B cell (primary cell): ENCODE measurements at regions of chr9 and their contacts with region 1.

Region 1: GRCh38 chr9:33264473-33265177 is at the starts of genes BAG1 and CHMP5:
- DNase-seq: peak; percentile 99
- ATAC-seq: peak; percentile 97
- H3K4me3 ChIP-seq: peak within 1 kb of the TSS; percentile 89 to 99 (median 97)
- H3K4me3 Mint-ChIP-seq: peak within 1 kb of the TSS; percentile 88
- H3K27ac ChIP-seq: peak within 1 kb of the TSS; percentile 92 to 96
- H3K27ac Mint-ChIP-seq: peak within 1 kb of the TSS; percentile 98
- H3K4me1 ChIP-seq: peaks cover 19 to 23% of the 10 kb centered on the region in 2 donors
- H3K4me1 Mint-ChIP-seq: peaks cover 39% of the 10 kb centered on the region
- H3K27me3 ChIP-seq: no peaks in the 10 kb centered on the region
- H3K27me3 Mint-ChIP-seq: no peaks in the 10 kb centered on the region
- CTCF ChIP-seq: peak; percentile 34
- total RNA-seq, gene BAG1: 53.8 and 60.2 TPM in 2 replicates
- total RNA-seq, gene CHMP5: 28.2 and 29.7 TPM in 2 replicates

Region 2: GRCh38 chr9:32550562-32551433 is 713.8 kb before region 1 on chr9:
- CTCF ChIA-PET with region 1: no interaction called
- POLR2A ChIA-PET with region 1: no interaction called
- intact Hi-C with region 1: loop called (anchors 10 kb)
- DNase-seq: peak; percentile 97
- ATAC-seq: peak; percentile 84
- H3K4me3 ChIP-seq: peak overlapping the region; percentile 86 to 98 (median 87)
- H3K4me3 Mint-ChIP-seq: peak overlapping the region; percentile 91
- H3K27ac ChIP-seq: peak overlapping the region; percentile 89 to 92
- H3K27ac Mint-ChIP-seq: peak overlapping the region; percentile 91
- H3K4me1 ChIP-seq: peaks cover 14 to 15% of the 10 kb centered on the region in 2 donors
- H3K4me1 Mint-ChIP-seq: peaks cover 34% of the 10 kb centered on the region
- H3K27me3 ChIP-seq: no peaks in the 10 kb centered on the region
- H3K27me3 Mint-ChIP-seq: no peaks in the 10 kb centered on the region
- CTCF ChIP-seq: peak; percentile 5

Region 3: DNA sequence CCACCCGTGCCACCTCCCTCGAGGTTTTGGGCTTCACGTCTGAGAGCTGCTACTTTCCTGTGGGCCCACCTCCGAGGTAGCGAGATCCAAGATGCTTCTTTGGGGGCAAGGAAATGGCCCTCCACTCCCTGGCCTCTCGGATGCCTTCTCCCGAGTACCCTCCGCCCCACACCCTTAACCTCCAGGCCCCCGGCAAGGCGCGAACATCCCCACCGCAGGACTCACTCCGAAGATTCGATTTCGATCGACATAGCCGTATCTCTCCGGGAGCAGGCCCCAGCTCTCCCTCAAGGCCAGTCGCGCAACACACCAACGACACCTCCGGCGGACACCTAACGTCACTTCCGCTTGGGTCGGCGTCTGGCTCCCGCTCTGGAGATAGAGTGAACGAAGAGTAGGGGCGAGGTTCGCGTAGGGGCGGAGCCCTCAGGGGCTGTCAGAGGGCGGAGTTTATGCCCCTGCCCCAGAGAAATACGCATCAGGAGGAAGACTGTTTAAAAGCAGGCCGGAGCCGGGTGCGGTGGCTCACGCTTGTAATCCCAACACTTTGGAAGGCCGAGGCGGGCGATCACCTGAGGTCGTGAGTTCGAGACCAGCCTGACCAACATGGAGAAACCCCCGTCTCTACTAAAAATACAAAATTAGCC is 188.1 kb before region 1 on chr9 and contains the start of gene SMU1:
- CTCF ChIA-PET with region 1: interaction called, 5 read pairs
- POLR2A ChIA-PET with region 1: interaction called, 3 read pairs
- intact Hi-C with region 1: loop called (anchors 5 kb)
- DNase-seq: peak; percentile 97
- ATAC-seq: peak; percentile 98
- H3K4me3 ChIP-seq: peak within 1 kb of the TSS; percentile 72 to 87 (median 84)
- H3K4me3 Mint-ChIP-seq: peak within 1 kb of the TSS; percentile 97
- H3K27ac ChIP-seq: peak within 1 kb of the TSS; percentile 91 to 95
- H3K27ac Mint-ChIP-seq: peak within 1 kb of the TSS; percentile 98
- H3K4me1 ChIP-seq: peaks cover 17 to 29% of the 10 kb centered on the region in 2 donors
- H3K4me1 Mint-ChIP-seq: peaks cover 34% of the 10 kb centered on the region
- H3K27me3 ChIP-seq: no peaks in the 10 kb centered on the region
- H3K27me3 Mint-ChIP-seq: no peaks in the 10 kb centered on the region
- CTCF ChIP-seq: no peak
- total RNA-seq, gene SMU1: 26.3 and 27.4 TPM in 2 replicates

Region 4: DNA sequence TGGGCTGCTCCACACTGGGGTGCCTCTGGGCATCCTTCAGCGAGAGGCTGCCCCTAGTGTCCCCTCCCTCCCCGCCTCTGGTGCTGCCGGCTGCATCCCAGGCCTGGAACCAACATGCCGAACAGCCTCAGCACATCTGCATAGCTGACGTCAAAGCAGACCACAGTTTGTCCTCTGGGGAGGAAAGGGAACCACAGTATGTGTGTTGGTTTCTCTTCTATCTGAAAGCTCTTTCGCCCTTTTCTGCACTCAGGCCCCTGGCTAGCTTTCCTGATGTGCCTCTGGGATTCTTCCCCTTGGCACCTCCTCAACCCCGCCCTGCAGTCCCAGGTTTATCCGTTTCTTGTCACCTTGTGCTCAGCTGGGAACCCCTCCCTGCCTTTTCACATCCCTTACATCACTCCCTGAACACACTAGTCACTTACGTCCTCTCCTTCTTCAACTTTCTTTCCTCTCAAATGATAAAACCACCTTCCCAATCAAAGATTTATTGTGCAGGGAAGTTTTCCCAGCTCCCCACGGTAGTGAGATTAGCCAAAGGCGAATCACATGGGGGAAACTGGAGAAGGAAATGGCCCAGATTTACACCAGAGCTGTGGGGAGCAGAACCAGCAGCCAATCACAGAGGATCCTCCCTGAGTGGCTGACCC is 61.9 kb before region 1 on chr9:
- CTCF ChIA-PET with region 1: no interaction called
- POLR2A ChIA-PET with region 1: no interaction called
- intact Hi-C with region 1: loop called (anchors 10 kb)
- DNase-seq: peak; percentile 91
- ATAC-seq: peak; percentile 99
- H3K4me3 ChIP-seq: peak overlapping the region in 1 of 5 experiments; percentile 4
- H3K4me3 Mint-ChIP-seq: peak overlapping the region; percentile 86
- H3K27ac ChIP-seq: peak overlapping the region in 1 of 2 donors; percentile 39
- H3K27ac Mint-ChIP-seq: peak overlapping the region; percentile 87
- H3K4me1 ChIP-seq: peaks cover 14 to 16% of the 10 kb centered on the region in 2 donors
- H3K4me1 Mint-ChIP-seq: peaks cover 20% of the 10 kb centered on the region
- H3K27me3 ChIP-seq: no peaks in the 10 kb centered on the region
- H3K27me3 Mint-ChIP-seq: no peaks in the 10 kb centered on the region
- CTCF ChIP-seq: no peak

Region 5: GRCh38 chr9:33372900-33373299 is 108.3 kb after region 1 on chr9:
- CTCF ChIA-PET with region 1: no interaction called
- POLR2A ChIA-PET with region 1: no interaction called
- intact Hi-C with region 1: no loop called
- DNase-seq: no peak
- ATAC-seq: no peak
- H3K4me3 ChIP-seq: no peak overlapping the region
- H3K4me3 Mint-ChIP-seq: no peak overlapping the region
- H3K27ac ChIP-seq: no peak overlapping the region
- H3K27ac Mint-ChIP-seq: no peak overlapping the region
- H3K4me1 ChIP-seq: peaks cover 0 to 7% of the 10 kb centered on the region in 2 donors
- H3K4me1 Mint-ChIP-seq: peaks cover 5% of the 10 kb centered on the region
- H3K27me3 ChIP-seq: no peaks in the 10 kb centered on the region
- H3K27me3 Mint-ChIP-seq: no peaks in the 10 kb centered on the region
- CTCF ChIP-seq: no peak

Region 6: DNA sequence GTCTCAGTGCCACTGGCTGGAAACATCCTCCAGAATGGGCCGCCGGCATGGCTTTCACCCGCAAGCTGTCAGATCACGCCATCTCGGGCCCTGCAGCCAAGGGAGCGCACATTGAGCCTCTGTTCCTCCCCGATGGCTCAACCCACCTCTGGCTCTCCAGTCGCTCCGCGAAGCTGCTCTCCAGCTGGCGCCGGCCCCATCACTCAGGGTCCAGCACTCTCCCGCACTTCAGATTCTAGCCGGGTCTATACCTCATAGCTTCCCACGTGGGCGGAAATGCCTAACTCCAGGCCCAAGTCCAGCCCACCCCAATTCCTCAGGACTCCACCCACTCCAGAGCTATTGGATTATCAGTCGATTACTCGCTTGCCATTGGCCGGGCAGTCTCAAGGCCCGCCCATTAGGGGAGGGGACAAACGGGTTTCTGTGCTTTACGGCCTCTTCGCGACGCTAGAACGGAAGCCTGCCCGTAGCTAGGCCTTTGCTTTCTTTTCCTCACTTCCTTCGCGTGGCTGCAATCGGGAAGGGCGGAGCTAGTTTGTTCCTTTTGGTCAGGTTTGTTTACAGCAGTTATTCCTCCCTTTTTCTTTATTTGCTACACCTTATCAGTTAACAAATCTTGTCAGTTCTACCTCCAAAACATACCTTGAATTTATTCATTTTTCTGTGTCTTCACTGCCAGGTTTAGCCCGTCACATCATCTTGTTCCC is 209.2 kb after region 1 on chr9 and contains the start of gene NOL6:
- CTCF ChIA-PET with region 1: no interaction called
- POLR2A ChIA-PET with region 1: interaction called, 3 read pairs
- intact Hi-C with region 1: loop called (anchors 10 kb)
- DNase-seq: peak; percentile 99
- ATAC-seq: peak; percentile 99
- H3K4me3 ChIP-seq: peak within 1 kb of the TSS; percentile 80 to 99 (median 95)
- H3K4me3 Mint-ChIP-seq: peak within 1 kb of the TSS; percentile 99
- H3K27ac ChIP-seq: peak within 1 kb of the TSS; percentile 44 to 81
- H3K27ac Mint-ChIP-seq: peak within 1 kb of the TSS; percentile 92
- H3K4me1 ChIP-seq: peaks cover 17 to 22% of the 10 kb centered on the region in 2 donors
- H3K4me1 Mint-ChIP-seq: peaks cover 28% of the 10 kb centered on the region
- H3K27me3 ChIP-seq: no peaks in the 10 kb centered on the region
- H3K27me3 Mint-ChIP-seq: no peaks in the 10 kb centered on the region
- CTCF ChIP-seq: no peak
- total RNA-seq, gene NOL6: 31.8 and 31.9 TPM in 2 replicates

Region 7: GRCh38 chr9:34048923-34049697 is 784.5 kb after region 1 on chr9:
- CTCF ChIA-PET with region 1: no interaction called
- POLR2A ChIA-PET with region 1: no interaction called
- intact Hi-C with region 1: loop called (anchors 10 kb)
- DNase-seq: peak; percentile 99
- ATAC-seq: peak; percentile 81
- H3K4me3 ChIP-seq: peak overlapping the region; percentile 74 to 95 (median 90)
- H3K4me3 Mint-ChIP-seq: peak overlapping the region; percentile 100
- H3K27ac ChIP-seq: peak overlapping the region; percentile 87 to 91
- H3K27ac Mint-ChIP-seq: peak overlapping the region; percentile 100
- H3K4me1 ChIP-seq: peaks cover 15 to 22% of the 10 kb centered on the region in 2 donors
- H3K4me1 Mint-ChIP-seq: peaks cover 26% of the 10 kb centered on the region
- H3K27me3 ChIP-seq: no peaks in the 10 kb centered on the region
- H3K27me3 Mint-ChIP-seq: no peaks in the 10 kb centered on the region
- CTCF ChIP-seq: no peak